Brain microvascular endothelial cell (primary cell): ENCODE measurements at regions of chr2 and their contacts with region 1.

Region 1: GRCh38 chr2:174985630-174986029 is 19.6 kb downstream of the CHN1 start:
- DNase-seq: no peak
- H3K4me3 ChIP-seq: no peak overlapping the region
- H3K27ac ChIP-seq: no peak overlapping the region
- H3K27me3 ChIP-seq: no peaks in the 10 kb centered on the region
- CTCF ChIP-seq: peak; percentile 47

Region 2: DNA sequence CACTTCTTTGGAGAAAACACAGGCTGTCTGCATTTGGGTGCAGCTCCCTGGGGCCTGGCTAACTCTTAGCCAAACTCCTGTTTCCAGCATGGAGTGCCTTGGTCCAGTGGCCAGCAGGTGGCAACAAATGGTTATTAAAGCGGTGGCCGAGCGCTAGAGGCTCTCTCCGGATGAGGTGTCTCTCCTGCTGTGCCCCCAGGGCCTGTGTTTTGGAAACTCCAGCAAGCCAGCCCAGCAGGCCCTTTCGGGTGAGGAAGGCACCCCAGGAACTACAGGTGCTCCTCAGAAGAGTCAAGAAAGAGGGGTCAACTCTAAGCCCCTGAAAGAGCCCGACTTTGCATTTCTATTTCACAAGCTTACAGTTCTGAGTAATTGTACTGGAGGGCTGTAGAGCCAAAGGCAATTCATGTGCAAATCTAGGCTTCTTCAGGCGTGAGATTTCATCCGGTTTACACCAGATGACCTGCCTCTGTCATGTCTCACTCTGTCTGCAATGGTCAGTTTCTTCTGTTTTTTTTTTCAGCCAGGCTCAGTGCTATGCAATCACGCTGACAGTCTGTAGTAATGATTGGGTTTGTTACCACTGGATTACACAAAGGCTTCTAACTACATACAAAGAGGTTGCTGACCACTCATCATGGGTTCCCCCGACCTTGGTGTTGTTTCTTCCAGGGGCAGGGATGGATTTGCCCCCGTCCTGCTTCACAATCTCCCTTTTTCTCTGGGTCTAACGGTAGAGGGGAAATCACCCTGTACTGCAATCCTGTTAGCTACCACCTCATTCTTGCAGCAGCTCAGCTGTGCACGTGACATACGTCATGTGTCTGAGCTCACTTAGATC is 213.8 kb before region 1 on chr2:
- in situ Hi-C with region 1: loop called (anchors 10 kb)
- DNase-seq: peak; percentile 77
- H3K4me3 ChIP-seq: no peak overlapping the region
- H3K27ac ChIP-seq: no peak overlapping the region
- H3K27me3 ChIP-seq: no peaks in the 10 kb centered on the region
- CTCF ChIP-seq: peak; percentile 92